Dendritic cell treated with granulocyte-macrophage colony-stimulating factor and Interleukin-4, amounts not matched to agents 40 ng/mL and 50 ng/mL, for 4 days (primary cell): ENCODE measurements at regions of chr5 and their contacts with region 1.

Region 1: GRCh38 chr5:14871210-14872069 is at the start of gene ANKH:
- H3K4me3 Mint-ChIP-seq: peak within 1 kb of the TSS; percentile 93
- H3K27ac Mint-ChIP-seq: peak within 1 kb of the TSS; percentile 83
- H3K4me1 Mint-ChIP-seq: peaks cover 21% of the 10 kb centered on the region
- H3K27me3 Mint-ChIP-seq: peaks cover 27% of the 10 kb centered on the region

Region 2: GRCh38 chr5:14664302-14665100 is 206.9 kb before region 1 on chr5 and contains the start of gene OTULIN:
- intact Hi-C with region 1: loop called (anchors 5 kb)
- H3K4me3 Mint-ChIP-seq: peak within 1 kb of the TSS; percentile 83
- H3K27ac Mint-ChIP-seq: peak within 1 kb of the TSS; percentile 90
- H3K4me1 Mint-ChIP-seq: peaks cover 44% of the 10 kb centered on the region
- H3K27me3 Mint-ChIP-seq: no peaks in the 10 kb centered on the region

Region 3: DNA sequence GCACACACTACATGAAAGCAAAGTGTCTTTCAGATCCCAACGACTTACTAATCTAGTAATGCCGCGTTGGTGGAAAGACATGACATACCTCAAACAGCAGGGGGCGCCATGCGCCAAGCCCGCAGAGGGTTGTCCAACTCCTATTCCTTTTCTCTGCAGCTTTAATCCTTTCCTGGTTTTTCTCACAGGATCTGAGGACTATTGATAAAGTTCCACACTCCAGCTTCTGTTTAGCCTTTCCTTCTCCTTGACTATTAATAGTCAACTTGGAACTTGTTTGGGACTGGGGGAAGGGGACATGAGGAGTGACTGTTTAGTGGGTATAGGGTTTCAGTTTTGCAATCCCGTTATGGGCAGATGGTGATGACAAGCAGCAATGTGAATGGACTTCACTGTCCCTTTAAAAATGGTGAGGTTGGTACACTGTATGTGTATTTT is 144.0 kb before region 1 on chr5:
- intact Hi-C with region 1: loop called (anchors 2 kb)
- H3K4me3 Mint-ChIP-seq: no peak overlapping the region
- H3K27ac Mint-ChIP-seq: no peak overlapping the region
- H3K4me1 Mint-ChIP-seq: peaks cover 45% of the 10 kb centered on the region
- H3K27me3 Mint-ChIP-seq: peaks cover 5% of the 10 kb centered on the region

Region 4: GRCh38 chr5:14809369-14810155 is 61.9 kb before region 1 on chr5:
- intact Hi-C with region 1: loop called (anchors 5 kb)
- H3K4me3 Mint-ChIP-seq: peak overlapping the region; percentile 32
- H3K27ac Mint-ChIP-seq: peak overlapping the region; percentile 87
- H3K4me1 Mint-ChIP-seq: peaks cover 54% of the 10 kb centered on the region
- H3K27me3 Mint-ChIP-seq: no peaks in the 10 kb centered on the region

Region 5: DNA sequence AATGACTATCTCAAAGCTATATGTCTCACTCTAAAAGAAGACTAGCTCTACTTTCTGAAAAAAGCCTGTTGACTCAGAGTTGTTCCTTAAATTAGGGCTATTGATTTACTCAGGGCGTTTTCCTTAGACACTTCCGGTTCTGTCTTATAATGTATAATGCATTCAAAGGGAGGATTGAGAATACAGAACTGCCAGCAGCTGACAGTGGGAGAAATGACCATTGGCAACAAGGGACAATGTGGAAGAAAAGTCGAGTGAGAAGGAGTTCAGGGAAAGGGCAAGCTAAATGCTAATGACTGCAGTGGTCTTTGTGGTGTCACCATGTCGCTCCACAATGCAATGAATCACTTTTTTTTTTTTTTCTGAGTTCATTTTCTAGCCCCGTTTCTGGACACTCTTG is 65.8 kb after region 1 on chr5:
- intact Hi-C with region 1: loop called (anchors 5 kb)
- H3K4me3 Mint-ChIP-seq: no peak overlapping the region
- H3K27ac Mint-ChIP-seq: peak overlapping the region; percentile 77
- H3K4me1 Mint-ChIP-seq: peaks cover 29% of the 10 kb centered on the region
- H3K27me3 Mint-ChIP-seq: peaks cover 4% of the 10 kb centered on the region

Region 6: DNA sequence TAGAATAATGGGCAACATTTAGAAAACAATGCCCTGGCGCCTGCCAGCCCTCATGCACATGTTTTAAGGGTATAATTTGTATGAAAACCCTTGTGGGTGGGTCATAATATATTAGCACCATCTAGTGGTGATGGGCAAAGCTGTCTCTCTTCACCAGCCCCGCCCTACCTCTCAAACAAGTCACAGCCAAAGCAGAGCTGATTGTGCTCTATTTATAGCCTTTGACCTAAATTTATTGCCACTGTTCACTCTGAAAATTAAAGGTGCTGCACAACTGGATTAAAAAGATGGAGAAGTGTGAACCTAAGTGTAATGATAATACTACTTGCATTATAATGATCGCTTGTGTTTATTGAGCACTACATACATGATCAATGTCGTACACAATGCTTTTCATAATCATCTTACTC is 132.1 kb after region 1 on chr5:
- intact Hi-C with region 1: loop called (anchors 5 kb)
- H3K4me3 Mint-ChIP-seq: no peak overlapping the region
- H3K27ac Mint-ChIP-seq: no peak overlapping the region
- H3K4me1 Mint-ChIP-seq: peaks cover 49% of the 10 kb centered on the region
- H3K27me3 Mint-ChIP-seq: peaks cover 18% of the 10 kb centered on the region